OCI-LY7 (cell line): ENCODE measurements at regions of chr16 and their contacts with region 1.

Region 1: DNA sequence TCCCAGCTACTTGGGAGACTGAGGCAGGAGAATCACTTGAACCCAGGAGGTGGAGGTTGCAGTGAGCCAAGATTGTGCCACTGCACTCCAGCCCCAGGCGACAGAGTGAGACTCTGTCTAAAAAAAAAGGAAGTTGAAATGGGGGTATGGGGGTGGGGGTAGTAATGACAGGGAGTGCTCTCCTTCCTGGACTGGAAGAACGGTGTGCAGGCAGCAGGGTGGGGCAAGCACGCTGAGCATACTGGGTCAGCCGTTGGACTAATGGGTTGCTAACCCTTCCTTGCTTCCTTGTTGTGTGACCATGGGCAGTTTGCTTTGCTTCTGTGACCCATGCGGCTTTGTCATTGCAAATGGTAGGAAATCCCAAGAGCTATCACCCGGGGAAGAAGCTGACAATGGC is 16.5 kb downstream of the KATNIP start:
- DNase-seq: no peak
- H3K4me3 ChIP-seq: no peak overlapping the region
- H3K27ac ChIP-seq: no peak overlapping the region
- H3K4me1 ChIP-seq: no peaks in the 10 kb centered on the region
- CTCF ChIP-seq: no peak

Region 2: GRCh38 chr16:27625050-27625697 is 58.8 kb after region 1 on chr16:
- CTCF ChIA-PET with region 1: no interaction called
- POLR2A ChIA-PET with region 1: no interaction called
- intact Hi-C with region 1: loop called (anchors 10 kb)
- DNase-seq: no peak
- H3K4me3 ChIP-seq: no peak overlapping the region
- H3K27ac ChIP-seq: no peak overlapping the region
- H3K4me1 ChIP-seq: no peaks in the 10 kb centered on the region
- CTCF ChIP-seq: no peak